Activated naive CD4-positive, alpha-beta T cell treated with anti-CD3 and anti-CD28 coated beads for 36 hours (primary cell): ENCODE measurements at regions of chr20 and their contacts with region 1.

Region 1: GRCh38 chr20:59782986-59783640 is 150.3 kb downstream of the SYCP2 start:
- DNase-seq: peak; percentile 71
- H3K4me3 Mint-ChIP-seq: no peak overlapping the region
- H3K27ac Mint-ChIP-seq: no peak overlapping the region
- H3K4me1 Mint-ChIP-seq: no peaks in the 10 kb centered on the region
- H3K27me3 Mint-ChIP-seq: no peaks in the 10 kb centered on the region

Region 2: DNA sequence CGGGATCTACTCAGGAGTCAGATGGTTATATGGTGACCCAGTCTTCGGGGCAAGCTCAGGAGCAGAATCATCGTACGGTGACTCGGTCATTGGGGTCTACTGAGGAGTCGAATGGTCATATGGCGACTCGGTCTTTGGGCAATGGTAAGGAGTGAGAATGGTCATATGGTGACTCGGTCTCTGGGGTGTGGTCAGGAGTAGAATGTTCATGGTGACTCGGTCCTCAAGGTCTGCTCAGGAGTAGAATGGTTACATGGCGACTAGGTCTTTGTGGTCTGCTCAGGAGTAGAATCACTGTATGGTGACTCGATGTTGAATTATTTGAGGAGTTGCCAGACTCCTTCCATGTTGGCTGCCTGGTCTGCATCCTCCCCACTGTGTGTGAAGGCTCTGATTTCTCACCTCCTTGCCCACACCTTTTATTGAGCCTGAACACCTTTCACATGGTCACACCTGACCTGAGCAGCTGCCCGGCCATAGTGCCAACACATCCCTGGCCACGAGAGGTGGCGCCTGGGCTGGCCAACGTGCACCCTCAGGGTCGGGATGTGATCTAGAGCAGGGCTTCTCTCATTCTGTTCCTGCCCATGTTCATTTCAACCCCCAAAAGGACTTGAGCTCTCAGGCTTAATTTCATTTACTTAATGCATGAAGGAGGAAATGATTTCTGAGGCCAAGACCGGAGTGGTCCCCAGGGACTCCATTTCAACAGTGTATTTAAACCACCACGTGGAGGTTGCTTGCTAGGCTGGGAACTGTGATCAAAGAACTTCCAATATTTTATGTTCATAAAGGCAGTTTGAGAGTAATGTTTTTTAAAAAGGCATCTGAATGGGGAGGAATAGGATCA is 59.3 kb before region 1 on chr20:
- CTCF ChIA-PET with region 1: no interaction called
- intact Hi-C with region 1: no loop called
- DNase-seq: no peak
- H3K4me3 Mint-ChIP-seq: no peak overlapping the region
- H3K27ac Mint-ChIP-seq: no peak overlapping the region
- H3K4me1 Mint-ChIP-seq: no peaks in the 10 kb centered on the region
- H3K27me3 Mint-ChIP-seq: no peaks in the 10 kb centered on the region

Region 3: GRCh38 chr20:59850018-59850641 is 67.0 kb after region 1 on chr20:
- CTCF ChIA-PET with region 1: interaction called, 16 read pairs
- intact Hi-C with region 1: loop called (anchors 1 kb)
- DNase-seq: no peak
- H3K4me3 Mint-ChIP-seq: no peak overlapping the region
- H3K27ac Mint-ChIP-seq: no peak overlapping the region
- H3K4me1 Mint-ChIP-seq: no peaks in the 10 kb centered on the region
- H3K27me3 Mint-ChIP-seq: no peaks in the 10 kb centered on the region

Region 4: DNA sequence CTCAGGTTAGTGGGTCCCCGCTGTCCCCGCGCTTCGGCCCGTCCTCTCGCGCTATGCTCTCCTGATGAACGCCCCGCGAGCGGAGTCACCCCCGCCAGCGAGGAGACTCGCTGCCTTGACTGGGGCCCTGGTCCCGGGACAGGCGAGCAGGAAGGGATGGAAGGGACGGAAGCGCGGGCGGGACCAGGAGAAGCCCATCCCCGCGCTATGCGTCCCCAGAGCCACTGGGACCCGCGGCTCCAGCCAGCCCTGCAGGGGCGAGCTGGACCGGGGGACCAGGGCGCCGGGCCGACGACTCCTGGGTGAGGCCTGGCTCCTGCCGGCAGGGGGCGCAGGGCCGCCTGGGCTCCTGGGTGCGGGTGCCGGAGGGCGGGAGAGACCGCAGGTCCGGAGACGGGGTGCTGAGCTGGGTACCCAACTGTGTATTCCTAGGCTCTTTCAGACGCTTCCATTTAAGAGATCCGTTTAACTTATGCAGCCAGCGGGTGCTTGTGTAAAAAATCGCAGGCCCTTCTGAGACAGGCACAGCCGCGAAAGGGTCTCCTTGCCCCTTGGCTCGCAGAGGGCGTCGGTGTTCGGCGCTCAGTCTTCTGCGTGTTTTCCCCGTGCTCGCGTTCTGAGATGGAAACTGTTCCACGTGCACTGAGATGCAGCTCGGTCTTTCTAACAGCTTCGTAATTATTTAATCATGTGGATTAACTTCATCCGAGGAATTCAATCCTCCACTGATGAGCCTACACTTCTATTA is 150.9 kb after region 1 on chr20:
- CTCF ChIA-PET with region 1: interaction called, 3 read pairs
- intact Hi-C with region 1: loop called (anchors 10 kb)
- DNase-seq: peak; percentile 77
- H3K4me3 Mint-ChIP-seq: peak overlapping the region; percentile 68
- H3K27ac Mint-ChIP-seq: no peak overlapping the region
- H3K4me1 Mint-ChIP-seq: peaks cover 29% of the 10 kb centered on the region
- H3K27me3 Mint-ChIP-seq: peaks cover 2% of the 10 kb centered on the region

Region 5: DNA sequence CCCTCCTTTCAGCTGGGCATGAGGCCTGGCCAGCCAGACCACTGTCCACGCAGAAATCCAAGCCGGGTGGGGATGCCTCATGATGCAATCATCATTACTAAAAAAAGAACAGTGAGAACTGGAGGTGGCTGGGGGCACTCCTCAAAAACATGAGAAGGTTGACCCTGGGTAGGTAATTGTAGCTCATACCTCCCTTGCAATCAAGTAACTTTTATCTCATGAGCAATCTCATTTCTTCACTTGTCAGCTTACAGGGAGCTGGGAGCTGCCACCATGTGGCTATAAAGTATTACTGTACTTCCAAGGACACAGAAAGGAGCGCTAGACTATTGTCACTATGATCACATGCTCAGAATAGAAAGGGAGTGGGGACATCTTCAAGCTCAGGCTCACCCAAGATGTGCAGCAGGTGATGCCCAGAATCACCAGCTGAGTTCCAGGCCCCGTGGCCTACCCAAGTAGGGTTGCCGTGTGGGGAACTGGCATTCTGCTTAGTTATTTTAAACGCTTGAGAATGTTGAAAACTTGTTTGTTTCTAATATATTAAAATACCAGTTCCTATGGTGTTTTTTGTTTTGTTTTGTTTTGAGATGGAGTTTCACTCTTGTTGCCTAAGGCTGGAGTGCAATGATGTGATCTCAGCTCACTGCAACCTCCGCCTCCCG is 172.2 kb after region 1 on chr20:
- CTCF ChIA-PET with region 1: no interaction called
- intact Hi-C with region 1: loop called (anchors 1 kb)
- DNase-seq: no peak
- H3K4me3 Mint-ChIP-seq: no peak overlapping the region
- H3K27ac Mint-ChIP-seq: no peak overlapping the region
- H3K4me1 Mint-ChIP-seq: no peaks in the 10 kb centered on the region
- H3K27me3 Mint-ChIP-seq: no peaks in the 10 kb centered on the region

Region 6: GRCh38 chr20:59994697-59995122 is 211.6 kb after region 1 on chr20:
- CTCF ChIA-PET with region 1: no interaction called
- intact Hi-C with region 1: no loop called
- DNase-seq: no peak
- H3K4me3 Mint-ChIP-seq: no peak overlapping the region
- H3K27ac Mint-ChIP-seq: no peak overlapping the region
- H3K4me1 Mint-ChIP-seq: peaks cover 2% of the 10 kb centered on the region
- H3K27me3 Mint-ChIP-seq: peaks cover 1% of the 10 kb centered on the region